ENCODE measurements at regions of chr1 and their contacts with region 1.

Region 1: GRCh38 chr1:167862432-167863076 is 51.4 kb downstream of the ADCY10 start:
- DNase-seq: no peak

Region 2: GRCh38 chr1:167784876-167785550 is 77.5 kb before region 1 on chr1:
- intact Hi-C with region 1: no loop called
- DNase-seq: no peak

Region 3: DNA sequence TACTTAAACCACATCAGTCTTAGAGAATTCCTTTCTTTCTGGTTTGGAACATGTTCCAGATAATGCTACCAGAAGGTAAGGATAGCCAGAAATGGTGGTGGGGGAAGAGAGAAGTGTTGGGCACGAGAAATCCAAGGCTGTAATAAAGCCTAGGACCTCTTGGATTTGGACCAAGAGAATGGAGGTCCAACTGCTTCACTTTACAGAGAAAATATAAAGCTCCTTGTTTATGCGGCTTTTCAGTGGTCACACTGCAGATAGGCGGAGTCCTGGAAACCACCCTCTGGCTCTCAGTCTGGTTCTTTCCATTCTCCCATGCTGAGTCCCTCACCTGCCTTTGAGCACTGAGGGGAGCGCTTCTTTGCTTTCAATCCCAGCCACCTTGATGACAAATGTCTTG is 36.4 kb before region 1 on chr1:
- intact Hi-C with region 1: loop called in 1 of 2 experiments (anchors 2 kb)
- DNase-seq: no peak

Measured in posterior vena cava (tissue), 2 donors.